HepG2 (cell line): ENCODE measurements at regions of chr1 and their contacts with region 1.

Region 1: GRCh38 chr1:52702886-52703787 is 5.0 kb upstream of the COA7 start:
- DNase-seq: peak; percentile 94
- ATAC-seq: peak; percentile 92
- H3K4me3 ChIP-seq: peak overlapping the region; percentile 45 to 69 (median 49)
- H3K27ac ChIP-seq: peak overlapping the region; percentile 76
- H3K4me1 ChIP-seq: peaks cover 49% of the 10 kb centered on the region
- H3K27me3 ChIP-seq: no peaks in the 10 kb centered on the region
- CTCF ChIP-seq: no peak
- EP300 ChIP-seq: peak in 1 of 2 experiments; percentile 31; a peak in 1 of 4 replicates
- POLR2A ChIP-seq: peak; percentile 58 to 80; a peak in 3 of 4 replicates
- RAD21 ChIP-seq: no peak; the same call in 1 of the 2 replicates

Region 2: GRCh38 chr1:52726265-52727113 is 23.4 kb after region 1 on chr1 and contains the start of gene ZYG11B:
- CTCF ChIA-PET with region 1: no interaction called
- POLR2A ChIA-PET with region 1: interaction called, 21 read pairs
- in situ Hi-C with region 1: no loop called
- intact Hi-C with region 1: loop called (anchors 2 kb)
- DNase-seq: peak; percentile 62
- ATAC-seq: peak; percentile 97
- H3K4me3 ChIP-seq: peak within 1 kb of the TSS; percentile 90 to 99 (median 92)
- H3K27ac ChIP-seq: peak within 1 kb of the TSS; percentile 84
- H3K4me1 ChIP-seq: peaks cover 34% of the 10 kb centered on the region
- H3K27me3 ChIP-seq: no peaks in the 10 kb centered on the region; a peak in 2 of 5 replicates
- CTCF ChIP-seq: no peak
- EP300 ChIP-seq: no peak
- POLR2A ChIP-seq: peak; percentile 49 to 77; a peak in 3 of 4 replicates
- RAD21 ChIP-seq: peak; percentile 59
- total RNA-seq, gene ZYG11B: 17.9 and 28.1 TPM in 2 replicates

Region 3: GRCh38 chr1:52825868-52826267 is 122.7 kb after region 1 on chr1:
- CTCF ChIA-PET with region 1: no interaction called
- POLR2A ChIA-PET with region 1: no interaction called
- in situ Hi-C with region 1: no loop called
- intact Hi-C with region 1: loop called (anchors 10 kb)
- DNase-seq: no peak
- ATAC-seq: no peak; the same call in 2 of the 3 replicates
- H3K4me3 ChIP-seq: no peak overlapping the region
- H3K27ac ChIP-seq: no peak overlapping the region
- H3K4me1 ChIP-seq: no peaks in the 10 kb centered on the region
- H3K27me3 ChIP-seq: no peaks in the 10 kb centered on the region
- CTCF ChIP-seq: 0 out of 2 replicates have a peak, but pooled peaks have one; percentile 6
- EP300 ChIP-seq: no peak
- POLR2A ChIP-seq: no peak
- RAD21 ChIP-seq: no peak

Region 4: DNA sequence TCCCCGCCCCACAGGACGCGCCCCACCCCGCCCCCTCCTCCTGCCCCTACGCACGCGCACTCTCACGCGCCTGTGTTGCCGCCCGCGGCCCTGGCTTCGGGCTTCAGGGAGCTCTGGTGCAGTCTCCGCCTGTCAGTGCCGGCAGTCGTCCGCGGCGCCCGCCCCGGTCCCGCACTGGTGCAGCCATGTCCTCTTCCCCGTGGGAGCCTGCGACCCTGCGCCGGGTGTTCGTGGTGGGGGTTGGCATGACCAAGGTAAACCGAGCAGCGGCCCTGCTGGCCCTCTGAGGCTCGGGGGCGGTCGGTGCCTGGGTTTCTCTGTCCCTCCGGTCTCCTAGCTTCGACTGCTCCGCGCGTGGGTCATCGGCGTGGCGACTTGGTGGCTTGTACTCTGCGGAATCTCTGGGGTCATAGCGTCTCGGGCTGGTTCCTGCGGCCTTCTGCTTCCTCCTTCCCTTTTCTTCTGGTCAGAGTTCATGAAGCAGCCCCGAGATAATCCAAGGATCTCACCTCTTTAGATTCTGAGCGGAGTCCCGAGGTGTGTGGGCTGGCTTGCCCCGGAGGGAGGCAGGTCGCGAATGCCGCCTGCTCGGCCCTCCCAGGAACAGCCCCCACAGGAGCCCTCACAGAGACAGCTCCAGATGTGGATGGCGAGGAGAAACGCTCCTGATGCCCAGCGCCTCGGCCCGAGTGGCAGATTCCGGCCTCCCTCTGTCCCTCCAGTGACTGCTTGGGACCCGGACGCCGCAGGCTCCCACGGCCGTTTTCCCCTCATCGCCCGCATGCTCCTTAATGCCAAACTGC is 224.3 kb after region 1 on chr1 and contains the start of gene SCP2:
- CTCF ChIA-PET with region 1: no interaction called
- POLR2A ChIA-PET with region 1: no interaction called
- in situ Hi-C with region 1: no loop called
- intact Hi-C with region 1: loop called (anchors 10 kb)
- DNase-seq: peak; percentile 51
- ATAC-seq: peak; percentile 90
- H3K4me3 ChIP-seq: peak within 1 kb of the TSS; percentile 86 to 95 (median 92)
- H3K27ac ChIP-seq: peak within 1 kb of the TSS; percentile 79
- H3K4me1 ChIP-seq: peaks cover 58% of the 10 kb centered on the region
- H3K27me3 ChIP-seq: no peaks in the 10 kb centered on the region
- CTCF ChIP-seq: no peak
- EP300 ChIP-seq: no peak
- POLR2A ChIP-seq: peak; percentile 48 to 84; a peak in 3 of 4 replicates
- RAD21 ChIP-seq: no peak
- total RNA-seq, gene SCP2: 133 and 215 TPM in 2 replicates